Activated CD4-positive, alpha-beta T cell treated with anti-CD3 and anti-CD28 coated beads for 36 hours (primary cell): ENCODE measurements at regions of chr20 and their contacts with region 1.

Region 1: DNA sequence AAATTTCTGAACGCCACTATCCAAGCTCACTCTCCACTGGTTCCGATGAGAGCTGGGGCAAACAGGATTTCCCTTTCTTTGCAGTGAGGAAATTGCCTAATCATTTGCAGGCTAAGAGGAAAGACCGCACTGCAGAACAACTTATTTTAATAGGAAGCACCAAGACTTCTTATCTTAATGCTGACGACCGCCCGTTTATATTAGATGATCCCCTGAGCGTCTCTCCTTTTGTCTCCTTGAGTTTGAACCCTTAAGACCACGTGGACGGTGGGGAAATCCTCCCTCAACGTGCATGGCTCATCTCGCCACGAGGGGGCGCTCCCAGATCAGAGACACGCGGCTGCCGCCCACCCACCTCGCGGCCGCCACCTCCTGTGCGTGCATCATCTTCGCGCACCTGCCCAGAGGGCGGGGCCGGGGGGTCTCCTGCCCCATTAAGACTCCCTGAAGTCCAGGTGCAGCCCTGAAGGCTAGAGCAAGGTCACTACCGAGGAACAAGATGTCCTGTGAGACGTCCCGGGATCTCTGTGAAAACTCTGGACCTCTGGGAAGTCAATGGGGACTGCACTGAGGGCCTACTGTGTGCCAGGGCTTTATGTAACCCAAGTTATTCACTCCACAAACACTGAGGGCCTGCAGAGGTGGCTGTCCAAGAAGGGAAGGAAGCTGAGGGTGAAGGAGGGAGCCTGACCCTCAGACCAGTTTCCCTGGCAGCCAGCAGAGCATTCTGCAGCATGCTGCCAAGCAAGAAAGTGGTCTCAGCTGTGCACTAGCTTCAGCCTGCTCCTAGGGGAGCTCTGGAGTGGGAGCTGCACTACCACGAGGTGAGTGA is 28.1 kb downstream of the PDYN start:
- DNase-seq: peak; percentile 93
- ATAC-seq: peak; percentile 93
- H3K4me3 Mint-ChIP-seq: peak overlapping the region; percentile 34
- H3K27ac Mint-ChIP-seq: no peak overlapping the region
- H3K4me1 Mint-ChIP-seq: peaks cover 11% of the 10 kb centered on the region
- H3K27me3 Mint-ChIP-seq: peaks cover 20% of the 10 kb centered on the region

Region 2: GRCh38 chr20:1663917-1664316 is 301.8 kb before region 1 on chr20:
- CTCF ChIA-PET with region 1: no interaction called
- POLR2A ChIA-PET with region 1: no interaction called
- intact Hi-C with region 1: no loop called
- DNase-seq: peak; percentile 46
- ATAC-seq: peak; percentile 55
- H3K4me3 Mint-ChIP-seq: peak overlapping the region; percentile 47
- H3K27ac Mint-ChIP-seq: peak overlapping the region; percentile 98
- H3K4me1 Mint-ChIP-seq: peaks cover 96% of the 10 kb centered on the region
- H3K27me3 Mint-ChIP-seq: no peaks in the 10 kb centered on the region

Region 3: DNA sequence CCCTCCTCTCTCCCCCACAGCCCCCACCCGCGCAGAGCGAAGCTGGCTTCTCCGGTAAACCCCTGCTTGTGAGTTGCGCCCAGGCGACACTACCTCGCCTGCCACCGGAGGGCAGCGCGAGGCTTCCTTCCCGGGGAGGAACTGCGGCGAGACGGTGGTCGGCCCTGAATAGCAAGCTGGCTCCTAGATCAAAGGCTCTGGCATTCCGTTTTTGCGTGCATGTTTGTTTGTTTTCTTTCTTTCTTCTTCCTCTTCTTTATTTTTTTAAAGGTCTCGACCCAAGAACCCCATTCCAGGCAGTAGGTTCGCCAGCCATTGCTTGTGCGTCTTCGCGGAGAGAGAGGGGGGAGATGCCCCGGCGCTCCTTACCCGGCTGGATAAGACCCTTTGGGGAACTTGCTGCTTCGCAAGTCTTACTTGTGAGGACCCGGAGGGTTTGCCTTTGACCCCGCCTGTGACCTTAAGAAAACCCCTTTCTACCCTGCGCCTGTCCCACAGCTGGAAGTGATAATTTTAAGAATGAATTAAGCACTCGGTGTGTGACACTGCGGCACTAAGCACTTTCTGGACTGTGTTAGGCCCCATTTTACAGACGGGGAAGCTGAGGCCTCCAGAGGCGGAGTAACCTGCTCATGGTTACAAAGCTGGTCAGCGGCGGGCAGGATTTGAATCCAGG is 163.2 kb before region 1 on chr20:
- CTCF ChIA-PET with region 1: no interaction called
- POLR2A ChIA-PET with region 1: no interaction called
- intact Hi-C with region 1: loop called in 1 of 2 experiments (anchors 2 kb)
- DNase-seq: peak; percentile 74
- ATAC-seq: peak; percentile 79
- H3K4me3 Mint-ChIP-seq: peak overlapping the region; percentile 59
- H3K27ac Mint-ChIP-seq: no peak overlapping the region
- H3K4me1 Mint-ChIP-seq: peaks cover 7% of the 10 kb centered on the region
- H3K27me3 Mint-ChIP-seq: peaks cover 43% of the 10 kb centered on the region

Region 4: GRCh38 chr20:1894951-1895673 is 70.6 kb before region 1 on chr20 and contains the start of gene SIRPA:
- CTCF ChIA-PET with region 1: interaction called, 3 read pairs
- POLR2A ChIA-PET with region 1: no interaction called
- intact Hi-C with region 1: loop called in 1 of 2 experiments (anchors 2 kb)
- DNase-seq: peak; percentile 26
- ATAC-seq: peak; percentile 65
- H3K4me3 Mint-ChIP-seq: peak within 1 kb of the TSS; percentile 48
- H3K27ac Mint-ChIP-seq: no peak within 1 kb of the TSS
- H3K4me1 Mint-ChIP-seq: no peaks in the 10 kb centered on the region
- H3K27me3 Mint-ChIP-seq: peaks cover 60% of the 10 kb centered on the region
- total RNA-seq, gene SIRPA: 0.05 TPM in 1 of 2 experiments, not detected in the other

Region 5: GRCh38 chr20:2005831-2006426 is 40.2 kb after region 1 on chr20:
- CTCF ChIA-PET with region 1: interaction called, 4 read pairs
- POLR2A ChIA-PET with region 1: no interaction called
- intact Hi-C with region 1: loop called in 1 of 2 experiments (anchors 1 kb)
- DNase-seq: peak; percentile 83
- ATAC-seq: no peak
- H3K4me3 Mint-ChIP-seq: no peak overlapping the region
- H3K27ac Mint-ChIP-seq: no peak overlapping the region
- H3K4me1 Mint-ChIP-seq: no peaks in the 10 kb centered on the region
- H3K27me3 Mint-ChIP-seq: peaks cover 20% of the 10 kb centered on the region

Region 6: GRCh38 chr20:2032155-2032554 is 66.4 kb after region 1 on chr20:
- CTCF ChIA-PET with region 1: no interaction called
- POLR2A ChIA-PET with region 1: no interaction called
- intact Hi-C with region 1: no loop called
- DNase-seq: no peak
- ATAC-seq: no peak
- H3K4me3 Mint-ChIP-seq: no peak overlapping the region
- H3K27ac Mint-ChIP-seq: no peak overlapping the region
- H3K4me1 Mint-ChIP-seq: no peaks in the 10 kb centered on the region
- H3K27me3 Mint-ChIP-seq: peaks cover 35% of the 10 kb centered on the region

Region 7: GRCh38 chr20:2093159-2093781 is 127.5 kb after region 1 on chr20:
- CTCF ChIA-PET with region 1: interaction called, 17 read pairs
- POLR2A ChIA-PET with region 1: no interaction called
- intact Hi-C with region 1: loop called in 1 of 2 experiments (anchors 2 kb)
- DNase-seq: peak; percentile 65
- ATAC-seq: peak; percentile 69
- H3K4me3 Mint-ChIP-seq: no peak overlapping the region
- H3K27ac Mint-ChIP-seq: no peak overlapping the region
- H3K4me1 Mint-ChIP-seq: no peaks in the 10 kb centered on the region
- H3K27me3 Mint-ChIP-seq: peaks cover 24% of the 10 kb centered on the region

Region 8: DNA sequence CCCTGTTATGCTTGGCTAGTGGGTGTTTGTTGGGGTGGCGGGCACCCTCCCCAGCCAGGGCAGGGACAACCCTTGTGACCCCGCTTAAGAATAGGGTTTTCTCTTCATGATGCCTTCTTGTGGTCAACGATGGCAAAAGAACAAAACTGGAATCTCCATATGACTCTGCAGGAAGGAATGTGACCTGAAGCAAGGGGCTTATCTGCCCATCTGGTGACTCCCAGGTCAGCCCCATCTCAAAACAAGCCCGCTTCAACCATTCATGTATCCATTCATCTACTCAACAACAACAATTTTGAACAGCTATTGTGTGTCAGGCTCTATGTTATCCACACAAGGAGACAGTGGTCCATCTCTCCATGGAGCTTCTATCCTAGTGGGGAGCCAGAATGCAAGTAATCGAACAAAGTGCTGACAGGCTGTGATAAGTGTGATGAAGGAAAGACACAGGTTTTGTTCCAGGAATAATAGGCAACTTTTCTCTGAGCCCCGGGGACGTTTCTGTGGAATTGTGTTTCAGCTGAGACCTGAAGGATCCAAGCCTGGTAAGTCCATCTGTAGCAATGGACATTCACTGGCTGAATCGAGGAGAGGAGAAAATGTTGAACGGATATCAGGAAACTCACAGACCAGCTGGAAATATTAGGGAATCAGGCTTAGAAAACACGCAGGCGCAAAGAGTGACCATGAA is 384.2 kb after region 1 on chr20:
- CTCF ChIA-PET with region 1: no interaction called
- POLR2A ChIA-PET with region 1: no interaction called
- intact Hi-C with region 1: loop called (anchors 1 to 5 kb)
- DNase-seq: no peak
- ATAC-seq: no peak
- H3K4me3 Mint-ChIP-seq: no peak overlapping the region
- H3K27ac Mint-ChIP-seq: no peak overlapping the region
- H3K4me1 Mint-ChIP-seq: peaks cover 6% of the 10 kb centered on the region
- H3K27me3 Mint-ChIP-seq: peaks cover 17% of the 10 kb centered on the region